ENCODE measurements at regions of chr14 and their contacts with region 1.

Region 1: DNA sequence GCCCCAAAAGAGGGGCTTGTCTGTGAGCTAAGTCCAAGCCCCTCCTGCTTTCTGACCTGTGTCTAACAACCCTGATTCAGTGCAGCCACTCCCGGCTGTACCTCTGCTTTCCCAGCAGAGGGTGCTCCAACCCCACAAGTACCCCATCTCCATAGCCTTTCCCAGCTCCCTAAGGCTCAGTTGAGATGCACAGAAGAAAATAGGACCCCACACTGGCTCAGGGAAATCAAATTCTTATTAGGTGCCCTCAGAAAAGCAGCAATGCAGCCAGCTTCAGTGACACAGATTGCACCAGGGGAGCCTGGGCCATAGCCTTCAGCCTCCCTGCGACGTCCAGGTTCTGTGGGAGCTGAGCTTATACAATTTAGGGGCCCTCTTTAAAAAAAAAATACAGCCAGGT is 49.9 kb downstream of the LRRC74A start:
- DNase-seq: peak; percentile 48
- H3K4me3 ChIP-seq: no peak overlapping the region
- H3K27ac ChIP-seq: no peak overlapping the region
- H3K4me1 ChIP-seq: no peaks in the 10 kb centered on the region
- H3K27me3 ChIP-seq: no peaks in the 10 kb centered on the region
- CTCF ChIP-seq: peak; percentile 87

Region 2: DNA sequence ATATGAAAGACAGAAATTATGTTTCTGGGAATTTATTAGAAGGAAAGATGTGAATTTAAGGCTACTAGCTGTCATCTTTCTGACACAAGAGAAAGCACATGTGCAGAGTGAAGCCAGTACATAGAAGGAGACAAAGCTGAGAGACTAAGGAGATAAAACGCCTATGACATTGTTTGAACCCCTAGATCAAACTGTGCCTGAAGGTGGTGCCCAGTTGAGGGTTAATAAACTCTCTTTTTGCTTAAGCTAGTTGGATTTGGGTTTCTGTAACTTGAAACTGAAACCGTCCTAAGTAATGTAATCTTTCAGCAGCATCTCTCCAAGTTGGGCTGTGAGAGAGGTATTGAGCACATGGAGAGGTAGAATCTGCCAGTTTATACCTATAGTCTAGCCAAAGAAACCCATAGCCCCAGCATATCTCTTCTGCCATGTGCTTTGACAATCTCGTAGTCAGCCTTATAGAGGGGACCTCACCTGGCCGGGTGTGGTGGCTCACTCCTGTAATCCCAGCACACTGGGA is 34.4 kb after region 1 on chr14:
- intact Hi-C with region 1: loop called (anchors 5 kb)
- DNase-seq: no peak
- H3K4me3 ChIP-seq: no peak overlapping the region
- H3K27ac ChIP-seq: no peak overlapping the region
- H3K4me1 ChIP-seq: no peaks in the 10 kb centered on the region
- H3K27me3 ChIP-seq: no peaks in the 10 kb centered on the region
- CTCF ChIP-seq: no peak

Region 3: GRCh38 chr14:77067632-77068514 is 191.8 kb after region 1 on chr14:
- intact Hi-C with region 1: loop called (anchors 1 kb)
- DNase-seq: peak; percentile 64
- H3K4me3 ChIP-seq: no peak overlapping the region
- H3K27ac ChIP-seq: no peak overlapping the region
- H3K4me1 ChIP-seq: no peaks in the 10 kb centered on the region
- H3K27me3 ChIP-seq: no peaks in the 10 kb centered on the region
- CTCF ChIP-seq: peak; percentile 75

Region 4: GRCh38 chr14:77098529-77099353 is 222.7 kb after region 1 on chr14:
- intact Hi-C with region 1: no loop called
- DNase-seq: peak; percentile 47
- H3K4me3 ChIP-seq: peak overlapping the region; percentile 70
- H3K27ac ChIP-seq: peak overlapping the region; percentile 98
- H3K4me1 ChIP-seq: peaks cover 14% of the 10 kb centered on the region
- H3K27me3 ChIP-seq: no peaks in the 10 kb centered on the region
- CTCF ChIP-seq: no peak

Region 5: GRCh38 chr14:77301103-77301502 is 425.0 kb after region 1 on chr14:
- intact Hi-C with region 1: loop called (anchors 5 kb)
- DNase-seq: peak; percentile 85
- H3K4me3 ChIP-seq: no peak overlapping the region
- H3K27ac ChIP-seq: no peak overlapping the region
- H3K4me1 ChIP-seq: no peaks in the 10 kb centered on the region
- H3K27me3 ChIP-seq: no peaks in the 10 kb centered on the region
- CTCF ChIP-seq: peak; percentile 65

Region 6: DNA sequence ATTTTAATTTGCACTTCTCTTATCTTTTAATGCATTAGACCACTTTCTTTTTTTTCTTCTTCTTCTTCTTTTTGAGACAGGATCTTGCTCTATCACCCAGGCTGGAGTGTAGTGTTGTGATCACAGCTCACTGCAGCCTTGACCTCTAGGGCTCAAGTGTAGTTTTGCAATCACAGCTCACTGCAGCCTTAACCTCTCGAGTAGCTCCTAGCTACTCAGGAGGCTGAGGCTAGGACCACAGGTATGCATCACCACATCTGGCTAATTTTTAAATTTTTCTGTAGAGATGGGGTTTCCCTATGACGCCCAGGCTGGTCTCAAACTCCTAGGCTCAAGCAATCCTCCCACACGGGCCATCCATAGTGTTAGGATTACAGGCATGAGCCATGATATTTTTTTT is 488.1 kb after region 1 on chr14:
- intact Hi-C with region 1: no loop called
- DNase-seq: no peak
- H3K4me3 ChIP-seq: no peak overlapping the region
- H3K27ac ChIP-seq: no peak overlapping the region
- H3K4me1 ChIP-seq: no peaks in the 10 kb centered on the region
- H3K27me3 ChIP-seq: no peaks in the 10 kb centered on the region
- CTCF ChIP-seq: no peak